ENCODE measurements at regions of chr5 and their contacts with region 1.

Region 1: DNA sequence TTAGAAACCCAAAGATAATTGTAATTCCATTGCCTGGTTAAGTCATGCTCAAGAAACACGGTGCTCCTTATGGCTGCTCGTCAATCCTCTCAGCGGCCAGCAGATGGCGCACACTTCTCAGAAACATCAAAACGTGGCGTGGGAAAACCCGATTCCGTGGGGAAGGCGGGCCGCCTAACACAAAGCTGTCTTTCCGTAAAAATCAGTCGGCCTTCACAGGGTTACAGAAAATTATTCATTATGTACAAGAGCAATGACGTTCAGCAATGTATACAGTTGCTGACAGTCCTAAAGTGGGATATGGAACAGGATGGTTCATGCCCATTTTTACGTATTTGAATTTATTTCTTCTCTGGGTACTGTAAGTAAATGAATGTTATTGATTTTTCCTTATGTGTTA is 83.5 kb downstream of the PDE4D start:
- DNase-seq: peak; percentile 71
- ATAC-seq: peak; percentile 82
- H3K4me3 ChIP-seq: no peak overlapping the region
- H3K27ac ChIP-seq: no peak overlapping the region
- H3K4me1 ChIP-seq: no peaks in the 10 kb centered on the region
- H3K27me3 ChIP-seq: peaks cover 9% of the 10 kb centered on the region
- CTCF ChIP-seq: peak; percentile 89
- POLR2A ChIP-seq: no peak
- RAD21 ChIP-seq: peak; percentile 76

Region 2: GRCh38 chr5:59923465-59923864 is 113.4 kb after region 1 on chr5:
- CTCF ChIA-PET with region 1: interaction called, 27 read pairs
- POLR2A ChIA-PET with region 1: no interaction called
- dilution Hi-C with region 1: no loop called
- in situ Hi-C with region 1: no loop called
- intact Hi-C with region 1: loop called (anchors 1 kb)
- DNase-seq: peak; percentile 30
- ATAC-seq: peak; percentile 61; the same call in 1 of the 2 replicates
- H3K4me3 ChIP-seq: no peak overlapping the region
- H3K27ac ChIP-seq: no peak overlapping the region
- H3K4me1 ChIP-seq: no peaks in the 10 kb centered on the region
- H3K27me3 ChIP-seq: no peaks in the 10 kb centered on the region
- CTCF ChIP-seq: peak; percentile 66
- POLR2A ChIP-seq: no peak
- RAD21 ChIP-seq: peak; percentile 77

Region 3: GRCh38 chr5:60287174-60287771 is 477.2 kb after region 1 on chr5:
- CTCF ChIA-PET with region 1: no interaction called
- POLR2A ChIA-PET with region 1: no interaction called
- dilution Hi-C with region 1: no loop called
- in situ Hi-C with region 1: loop called (anchors 25 kb)
- intact Hi-C with region 1: loop called (anchors 2 kb)
- DNase-seq: peak; percentile 16
- ATAC-seq: no peak; the same call in 1 of the 2 replicates
- H3K4me3 ChIP-seq: no peak overlapping the region
- H3K27ac ChIP-seq: no peak overlapping the region
- H3K4me1 ChIP-seq: no peaks in the 10 kb centered on the region
- H3K27me3 ChIP-seq: no peaks in the 10 kb centered on the region
- CTCF ChIP-seq: no peak; the same call in 1 of the 2 replicates
- POLR2A ChIP-seq: no peak
- RAD21 ChIP-seq: 0 out of 2 replicates have a peak, but pooled peaks have one; percentile 16

Region 4: DNA sequence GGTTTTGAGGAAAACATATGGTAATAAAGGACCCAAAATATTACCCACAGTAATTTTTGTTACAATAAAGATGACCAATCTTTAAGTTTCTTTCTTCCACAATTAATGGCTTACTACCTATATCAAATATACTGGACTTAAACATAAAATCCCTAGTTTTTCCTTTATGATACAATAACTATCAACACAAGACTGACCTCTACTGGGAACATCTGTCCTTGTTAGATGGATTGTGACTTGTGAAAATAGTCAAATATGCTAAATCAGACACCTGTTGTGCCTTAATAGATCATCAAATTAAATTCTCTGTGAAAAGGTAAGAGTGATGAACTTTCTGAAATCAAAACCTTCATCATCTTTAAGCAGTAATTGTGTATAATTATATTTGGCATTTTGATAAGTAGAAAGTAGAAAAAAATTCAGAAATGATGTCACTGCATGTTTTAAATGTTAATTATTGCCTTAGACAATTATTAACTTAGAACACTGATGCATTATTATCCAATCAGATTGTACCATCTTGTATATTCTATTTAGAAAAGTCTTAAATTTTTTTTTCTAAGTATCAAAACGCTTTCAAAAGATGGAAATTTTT is 776.4 kb after region 1 on chr5:
- CTCF ChIA-PET with region 1: no interaction called
- POLR2A ChIA-PET with region 1: no interaction called
- dilution Hi-C with region 1: no loop called
- in situ Hi-C with region 1: no loop called
- intact Hi-C with region 1: loop called (anchors 1 kb)
- DNase-seq: peak; percentile 50
- ATAC-seq: peak; percentile 53; the same call in 1 of the 2 replicates
- H3K4me3 ChIP-seq: no peak overlapping the region
- H3K27ac ChIP-seq: no peak overlapping the region
- H3K4me1 ChIP-seq: no peaks in the 10 kb centered on the region
- H3K27me3 ChIP-seq: no peaks in the 10 kb centered on the region
- CTCF ChIP-seq: peak; percentile 51
- POLR2A ChIP-seq: no peak
- RAD21 ChIP-seq: peak; percentile 50

Region 5: GRCh38 chr5:60668686-60669304 is 858.8 kb after region 1 on chr5:
- CTCF ChIA-PET with region 1: interaction called, 4 read pairs
- POLR2A ChIA-PET with region 1: no interaction called
- dilution Hi-C with region 1: no loop called
- in situ Hi-C with region 1: loop called (anchors 10 kb)
- intact Hi-C with region 1: loop called (anchors 5 kb)
- DNase-seq: peak; percentile 41
- ATAC-seq: no peak
- H3K4me3 ChIP-seq: no peak overlapping the region
- H3K27ac ChIP-seq: no peak overlapping the region
- H3K4me1 ChIP-seq: no peaks in the 10 kb centered on the region
- H3K27me3 ChIP-seq: no peaks in the 10 kb centered on the region
- CTCF ChIP-seq: peak; percentile 60
- POLR2A ChIP-seq: no peak
- RAD21 ChIP-seq: peak; percentile 41